ENCODE measurements at regions of chr4 and their contacts with region 1.

Region 1: DNA sequence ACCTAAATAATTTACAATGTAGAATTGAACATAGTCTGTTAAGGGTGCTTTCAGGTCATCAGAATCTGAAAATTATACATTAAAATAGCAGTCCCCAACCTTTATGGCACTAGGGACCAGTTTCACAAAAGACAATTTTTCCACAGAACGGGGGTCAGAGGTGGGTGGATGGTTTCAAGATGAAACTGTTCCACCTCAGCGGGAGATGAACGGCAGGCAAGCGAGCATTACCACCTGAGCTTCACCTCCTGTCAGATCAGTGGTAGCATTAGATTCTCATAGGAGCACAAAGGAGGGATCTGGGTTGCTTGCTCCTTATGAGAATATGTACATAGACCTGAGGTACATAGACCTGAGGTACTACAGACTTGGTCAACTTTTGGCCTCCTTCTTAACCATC is 29.0 kb downstream of the LRBA start:
- DNase-seq: peak; percentile 61
- H3K4me3 Mint-ChIP-seq: no peak overlapping the region
- H3K27ac Mint-ChIP-seq: no peak overlapping the region
- H3K4me1 Mint-ChIP-seq: peaks cover 33% of the 10 kb centered on the region
- H3K27me3 Mint-ChIP-seq: no peaks in the 10 kb centered on the region

Region 2: DNA sequence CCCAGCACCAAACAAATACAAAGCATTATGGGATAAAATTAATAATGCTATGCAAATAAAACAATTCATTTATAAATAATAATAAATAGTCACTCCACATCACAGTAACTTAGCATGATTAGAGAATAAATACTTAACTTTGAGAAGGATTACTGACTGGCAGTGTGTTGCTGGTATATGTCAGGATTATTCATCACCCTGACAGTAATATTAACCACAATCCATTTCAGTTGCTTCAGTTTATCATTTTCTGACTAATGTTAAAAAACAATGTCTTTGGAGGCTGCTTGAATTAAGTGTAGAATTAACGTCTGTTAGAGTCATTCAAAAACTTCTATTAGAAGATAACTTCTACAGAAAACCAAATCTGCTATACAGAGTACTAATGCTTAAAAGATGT is 528.3 kb before region 1 on chr4:
- CTCF ChIA-PET with region 1: no interaction called
- POLR2A ChIA-PET with region 1: no interaction called
- intact Hi-C with region 1: no loop called
- DNase-seq: no peak
- H3K4me3 Mint-ChIP-seq: no peak overlapping the region
- H3K27ac Mint-ChIP-seq: no peak overlapping the region
- H3K4me1 Mint-ChIP-seq: no peaks in the 10 kb centered on the region
- H3K27me3 Mint-ChIP-seq: no peaks in the 10 kb centered on the region

Region 3: GRCh38 chr4:150970685-150971151 is 15.4 kb before region 1 on chr4:
- CTCF ChIA-PET with region 1: no interaction called
- POLR2A ChIA-PET with region 1: no interaction called
- intact Hi-C with region 1: loop called (anchors 2 kb)
- DNase-seq: no peak
- H3K4me3 Mint-ChIP-seq: no peak overlapping the region
- H3K27ac Mint-ChIP-seq: peak overlapping the region; percentile 10
- H3K4me1 Mint-ChIP-seq: peaks cover 59% of the 10 kb centered on the region
- H3K27me3 Mint-ChIP-seq: no peaks in the 10 kb centered on the region

Region 4: DNA sequence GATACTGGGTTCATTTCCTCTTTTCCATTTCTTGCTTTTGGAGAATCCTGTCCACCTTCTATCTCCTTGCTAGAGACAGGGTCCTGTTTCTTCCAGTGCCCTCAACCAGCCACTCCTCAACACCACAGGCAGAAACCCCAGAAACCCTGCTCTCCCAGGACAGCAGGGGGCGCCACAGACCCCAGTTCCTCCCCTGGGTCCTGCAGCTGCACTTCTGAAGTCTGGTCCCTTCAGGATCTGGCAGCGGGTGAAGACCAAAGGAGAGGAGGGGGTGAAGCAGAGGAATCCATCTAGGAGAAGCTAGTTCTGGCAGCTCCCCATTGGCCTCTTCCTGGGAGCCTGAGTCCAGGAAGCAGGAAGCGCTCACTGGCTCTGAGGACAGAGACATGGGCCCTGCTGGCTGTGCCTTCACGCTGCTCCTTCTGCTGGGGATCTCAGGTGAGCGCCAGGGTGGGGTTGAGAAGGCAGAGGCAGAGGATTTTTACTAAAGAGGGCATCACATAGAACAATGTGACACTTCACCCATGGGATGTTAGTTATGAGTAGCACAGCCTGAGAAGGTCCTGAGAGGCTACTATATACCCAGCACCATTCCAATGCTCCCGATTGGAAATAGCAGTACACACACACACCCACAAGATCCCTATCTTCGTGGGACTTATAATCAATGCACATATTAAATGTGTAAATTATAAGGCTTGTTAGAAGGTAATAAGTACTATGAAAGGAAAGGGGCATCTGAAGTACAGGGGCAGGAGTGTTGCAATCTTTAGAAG is 290.9 kb after region 1 on chr4 and contains the start of gene PRSS48:
- CTCF ChIA-PET with region 1: no interaction called
- POLR2A ChIA-PET with region 1: no interaction called
- intact Hi-C with region 1: no loop called
- DNase-seq: peak; percentile 67
- H3K4me3 Mint-ChIP-seq: no peak within 1 kb of the TSS
- H3K27ac Mint-ChIP-seq: no peak within 1 kb of the TSS
- H3K4me1 Mint-ChIP-seq: no peaks in the 10 kb centered on the region
- H3K27me3 Mint-ChIP-seq: peaks cover 1% of the 10 kb centered on the region
- total RNA-seq, gene PRSS48: not detected

Measured in activated CD4-positive, alpha-beta memory T cell treated with anti-CD3 and anti-CD28 coated beads for 36 hours (primary cell).